Lower lobe of right lung (tissue), 2 donors: ENCODE measurements at regions of chr1 and their contacts with region 1.

Region 1: DNA sequence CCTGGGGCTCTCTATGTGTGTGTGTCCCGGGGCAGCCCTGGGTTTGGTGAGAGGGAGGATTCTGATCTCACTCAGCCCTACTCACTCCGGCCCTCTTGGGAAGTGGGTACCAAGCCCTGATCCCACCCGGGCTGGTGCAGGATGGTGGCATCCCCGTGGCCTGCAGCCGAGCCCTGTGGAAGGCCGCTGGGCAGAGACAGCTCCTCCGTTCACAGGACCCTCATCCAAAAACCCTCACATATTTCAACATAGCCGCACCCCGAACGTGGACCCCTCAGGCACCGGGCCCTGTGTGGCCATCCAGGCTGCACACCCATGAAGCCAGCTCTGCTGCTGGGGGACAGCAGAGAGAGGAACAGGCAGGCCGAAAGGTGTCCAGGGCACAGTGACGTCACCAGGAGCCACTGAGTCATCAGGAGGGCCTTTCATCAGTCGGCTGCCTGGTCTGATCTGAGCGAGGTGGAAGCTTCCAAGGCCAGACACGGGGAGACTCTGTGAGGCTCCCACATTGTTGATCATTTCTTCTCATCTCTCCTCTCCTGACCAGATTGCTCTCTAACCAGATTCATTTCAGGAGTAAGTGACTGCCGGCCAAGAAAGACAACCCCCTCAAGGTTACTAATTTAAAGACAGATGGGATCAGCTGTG is 16.2 kb upstream of the GPR157 start:
- DNase-seq: peak; percentile 41
- ATAC-seq: no peak
- H3K4me3 ChIP-seq: no peak overlapping the region
- H3K27ac ChIP-seq: no peak overlapping the region
- H3K4me1 ChIP-seq: peaks cover 20% of the 10 kb centered on the region
- H3K27me3 ChIP-seq: no peaks in the 10 kb centered on the region
- CTCF ChIP-seq: no peak

Region 2: GRCh38 chr1:9196129-9197040 is 51.2 kb after region 1 on chr1:
- intact Hi-C with region 1: loop called (anchors 10 kb)
- DNase-seq: peak; percentile 74
- ATAC-seq: peak; percentile 74 to 81
- H3K4me3 ChIP-seq: peak overlapping the region; percentile 6
- H3K27ac ChIP-seq: peak overlapping the region; percentile 51
- H3K4me1 ChIP-seq: peaks cover 22% of the 10 kb centered on the region
- H3K27me3 ChIP-seq: peaks cover 43% of the 10 kb centered on the region
- CTCF ChIP-seq: peak; percentile 88

Region 3: DNA sequence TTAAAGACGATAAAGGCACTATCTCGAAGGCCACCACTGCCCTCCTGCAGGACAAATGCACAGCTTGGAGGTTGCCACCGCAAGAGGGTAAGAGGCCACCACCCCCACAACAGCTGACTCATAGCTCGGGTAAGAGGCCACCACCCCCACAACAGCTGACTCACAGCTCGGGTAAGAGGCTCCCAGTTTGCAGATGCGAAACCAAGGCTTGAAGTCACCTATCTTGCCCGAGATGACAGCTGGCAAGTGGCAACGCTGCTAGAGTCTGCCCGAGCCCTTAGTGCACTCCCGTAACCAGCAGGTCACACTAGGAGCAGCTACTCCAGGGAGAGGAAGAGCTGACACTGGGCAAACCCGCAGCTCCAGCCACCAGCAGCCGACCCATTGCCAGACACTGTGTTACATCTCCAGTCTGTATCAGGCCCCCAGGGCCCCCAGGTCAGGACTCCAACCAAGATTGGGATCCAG is 130.5 kb after region 1 on chr1:
- intact Hi-C with region 1: no loop called
- DNase-seq: peak; percentile 85
- ATAC-seq: peak; percentile 84 to 89
- H3K4me3 ChIP-seq: no peak overlapping the region
- H3K27ac ChIP-seq: no peak overlapping the region
- H3K4me1 ChIP-seq: peaks cover 9% of the 10 kb centered on the region
- H3K27me3 ChIP-seq: no peaks in the 10 kb centered on the region
- CTCF ChIP-seq: no peak